Activated naive CD8-positive, alpha-beta T cell treated with anti-CD3 and anti-CD28 coated beads, Interleukin-2, amount 10 ng/mL, durations not matched to agents 7 days and 5 days (primary cell): ENCODE measurements at regions of chr21 and their contacts with region 1.

Region 1: DNA sequence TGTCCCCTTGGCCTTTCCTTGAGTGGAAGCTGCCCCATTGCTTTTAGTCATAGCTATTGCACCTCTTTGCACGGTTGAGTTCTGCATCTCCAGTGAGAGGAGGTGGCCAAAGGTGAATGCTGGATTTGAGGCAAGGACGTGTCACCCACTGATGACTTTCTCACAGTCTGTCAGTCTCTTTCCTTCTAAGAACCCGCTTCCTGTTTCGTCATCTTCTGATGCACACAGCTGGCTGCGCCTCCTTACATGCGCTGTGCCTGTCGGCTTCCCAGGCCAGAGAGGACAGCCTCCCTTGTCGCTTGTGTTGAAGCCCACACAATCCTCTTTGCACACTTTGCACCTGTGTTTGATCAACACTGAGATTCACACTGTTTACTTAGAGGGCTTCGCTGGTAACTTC is 41.8 kb upstream of the PWP2 start:
- DNase-seq: peak; percentile 68
- ATAC-seq: peak; percentile 99
- H3K4me3 Mint-ChIP-seq: peak overlapping the region; percentile 81
- H3K27ac Mint-ChIP-seq: peak overlapping the region; percentile 97
- H3K4me1 Mint-ChIP-seq: peaks cover 30% of the 10 kb centered on the region
- H3K27me3 Mint-ChIP-seq: no peaks in the 10 kb centered on the region

Region 2: GRCh38 chr21:44083631-44084291 is 18.3 kb after region 1 on chr21:
- POLR2A ChIA-PET with region 1: interaction called, 17 read pairs
- DNase-seq: peak; percentile 76
- ATAC-seq: peak; percentile 75
- H3K4me3 Mint-ChIP-seq: peak overlapping the region; percentile 83
- H3K27ac Mint-ChIP-seq: peak overlapping the region; percentile 92
- H3K4me1 Mint-ChIP-seq: peaks cover 76% of the 10 kb centered on the region
- H3K27me3 Mint-ChIP-seq: no peaks in the 10 kb centered on the region